ENCODE measurements at regions of chr5 and their contacts with region 1.

Region 1: DNA sequence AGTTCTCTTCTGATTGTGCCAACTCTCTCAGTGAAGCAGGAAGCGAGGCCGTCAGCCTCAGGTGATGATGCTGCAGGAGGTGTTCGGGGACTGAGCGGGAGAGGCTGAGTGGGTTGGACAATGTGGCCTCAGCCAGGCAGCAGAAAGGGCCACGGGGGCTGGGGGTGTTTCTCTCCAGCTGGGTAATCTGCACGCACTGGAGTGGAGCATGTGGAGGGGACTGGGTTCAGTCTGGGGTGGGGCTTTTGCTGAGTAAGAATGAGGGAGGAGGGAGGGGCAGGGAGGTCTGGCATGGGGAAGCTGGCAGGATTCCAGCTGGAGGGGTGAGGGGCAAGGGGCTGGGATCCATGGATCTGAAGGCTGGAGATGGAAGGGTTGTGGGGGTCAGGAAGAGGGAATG is 60.8 kb upstream of the PHYKPL start:
- DNase-seq: no peak
- H3K4me3 ChIP-seq: no peak overlapping the region
- H3K27ac ChIP-seq: no peak overlapping the region
- H3K4me1 ChIP-seq: peaks cover 0 to 3% (median 0%) of the 10 kb centered on the region in 4 donors
- H3K27me3 ChIP-seq: peaks cover 13% of the 10 kb centered on the region
- CTCF ChIP-seq: no peak
- EP300 ChIP-seq: no peak
- POLR2A ChIP-seq: no peak

Region 2: GRCh38 chr5:178542455-178542854 is 249.1 kb after region 1 on chr5:
- in situ Hi-C with region 1: loop called in 1 of 4 experiments (anchors 10 kb)
- intact Hi-C with region 1: no loop called
- DNase-seq: no peak
- H3K4me3 ChIP-seq: no peak overlapping the region
- H3K27ac ChIP-seq: peak overlapping the region in 1 of 4 donors; percentile 30
- H3K4me1 ChIP-seq: no peaks in the 10 kb centered on the region
- H3K27me3 ChIP-seq: no peaks in the 10 kb centered on the region
- CTCF ChIP-seq: no peak
- EP300 ChIP-seq: no peak
- POLR2A ChIP-seq: no peak

Measured in transverse colon (tissue), 4 donors.